Calu3 (cell line): ENCODE measurements at regions of chr16 and their contacts with region 1.

Region 1: DNA sequence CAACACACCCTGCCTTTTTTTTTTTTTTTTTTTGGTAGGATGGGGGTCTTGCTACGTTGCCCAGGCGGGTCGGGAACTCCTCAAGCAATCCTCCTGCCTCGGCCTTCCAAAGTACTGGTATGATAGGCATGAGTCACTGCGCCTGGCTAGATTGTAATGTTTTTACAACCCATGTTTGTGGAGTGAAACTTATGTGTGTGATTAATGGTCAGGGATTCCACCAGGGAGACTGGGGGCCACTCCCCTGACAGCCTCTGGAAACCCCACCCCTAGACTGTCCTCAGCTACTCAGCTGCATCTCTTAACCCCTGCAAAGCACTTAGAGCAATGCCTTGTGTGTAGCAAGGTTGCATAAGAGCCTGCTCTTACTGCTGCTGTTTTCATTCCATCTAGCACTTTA is 220.5 kb downstream of the PARN start:
- DNase-seq: peak; percentile 22
- H3K4me3 Mint-ChIP-seq: no peak overlapping the region
- H3K27ac Mint-ChIP-seq: no peak overlapping the region
- H3K4me1 Mint-ChIP-seq: no peaks in the 10 kb centered on the region
- H3K27me3 Mint-ChIP-seq: no peaks in the 10 kb centered on the region
- CTCF ChIP-seq: no peak

Region 2: GRCh38 chr16:14427371-14427948 is 17.9 kb after region 1 on chr16:
- CTCF ChIA-PET with region 1: interaction called, 13 read pairs
- intact Hi-C with region 1: no loop called
- DNase-seq: peak; percentile 13
- H3K4me3 Mint-ChIP-seq: no peak overlapping the region
- H3K27ac Mint-ChIP-seq: no peak overlapping the region
- H3K4me1 Mint-ChIP-seq: peaks cover 18% of the 10 kb centered on the region
- H3K27me3 Mint-ChIP-seq: no peaks in the 10 kb centered on the region
- CTCF ChIP-seq: no peak